ENCODE measurements at regions of chr13 and their contacts with region 1.

Region 1: GRCh38 chr13:99307648-99308339 is 595 bp upstream of the GPR183 start:
- H3K4me3 Mint-ChIP-seq: peak overlapping the region; percentile 87
- H3K27ac Mint-ChIP-seq: peak overlapping the region; percentile 94
- H3K4me1 Mint-ChIP-seq: peaks cover 71% of the 10 kb centered on the region
- H3K27me3 Mint-ChIP-seq: no peaks in the 10 kb centered on the region

Region 2: DNA sequence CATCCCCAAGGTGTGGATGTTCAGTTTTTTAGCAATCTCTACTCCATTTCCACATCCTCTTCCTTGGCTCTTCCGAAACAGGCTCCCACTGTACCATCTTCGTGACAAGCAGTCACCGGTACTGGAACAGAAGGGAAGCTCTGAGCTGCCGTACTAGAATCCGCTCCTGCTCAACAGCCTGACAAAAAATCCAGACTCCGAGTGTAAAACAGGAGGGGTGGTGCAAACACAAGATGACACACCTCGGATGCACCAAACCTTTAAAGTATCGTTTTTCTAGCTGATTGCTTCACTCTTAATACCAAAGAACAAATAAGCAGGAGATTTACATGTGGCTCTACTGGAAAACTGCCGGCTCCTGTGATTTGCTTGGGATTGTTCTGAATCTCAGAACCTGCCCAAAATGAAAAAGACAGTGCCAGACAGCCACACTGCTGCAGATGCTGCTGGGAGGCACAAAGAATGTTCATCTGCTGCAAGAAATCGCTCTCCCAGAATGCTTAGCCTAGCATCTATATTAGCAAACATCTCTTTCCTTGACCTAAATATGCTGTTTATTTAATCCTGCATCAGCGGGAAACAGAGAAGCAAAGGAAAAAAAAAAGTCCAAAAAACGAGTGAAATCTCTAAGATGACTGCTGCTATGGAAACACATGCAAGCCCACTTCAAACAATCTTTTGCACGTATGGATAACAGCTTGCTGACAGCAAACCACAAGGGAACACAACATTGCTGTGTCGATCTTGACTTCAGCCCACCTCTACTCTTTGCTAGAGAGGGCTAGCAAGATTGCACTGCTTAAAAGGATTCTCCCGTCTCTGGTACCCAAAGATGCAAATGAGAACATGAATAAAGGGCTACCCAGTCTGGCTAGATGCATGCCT is 291.9 kb before region 1 on chr13:
- intact Hi-C with region 1: no loop called
- H3K4me3 Mint-ChIP-seq: no peak overlapping the region
- H3K27ac Mint-ChIP-seq: no peak overlapping the region
- H3K4me1 Mint-ChIP-seq: no peaks in the 10 kb centered on the region
- H3K27me3 Mint-ChIP-seq: peaks cover 69% of the 10 kb centered on the region

Region 3: DNA sequence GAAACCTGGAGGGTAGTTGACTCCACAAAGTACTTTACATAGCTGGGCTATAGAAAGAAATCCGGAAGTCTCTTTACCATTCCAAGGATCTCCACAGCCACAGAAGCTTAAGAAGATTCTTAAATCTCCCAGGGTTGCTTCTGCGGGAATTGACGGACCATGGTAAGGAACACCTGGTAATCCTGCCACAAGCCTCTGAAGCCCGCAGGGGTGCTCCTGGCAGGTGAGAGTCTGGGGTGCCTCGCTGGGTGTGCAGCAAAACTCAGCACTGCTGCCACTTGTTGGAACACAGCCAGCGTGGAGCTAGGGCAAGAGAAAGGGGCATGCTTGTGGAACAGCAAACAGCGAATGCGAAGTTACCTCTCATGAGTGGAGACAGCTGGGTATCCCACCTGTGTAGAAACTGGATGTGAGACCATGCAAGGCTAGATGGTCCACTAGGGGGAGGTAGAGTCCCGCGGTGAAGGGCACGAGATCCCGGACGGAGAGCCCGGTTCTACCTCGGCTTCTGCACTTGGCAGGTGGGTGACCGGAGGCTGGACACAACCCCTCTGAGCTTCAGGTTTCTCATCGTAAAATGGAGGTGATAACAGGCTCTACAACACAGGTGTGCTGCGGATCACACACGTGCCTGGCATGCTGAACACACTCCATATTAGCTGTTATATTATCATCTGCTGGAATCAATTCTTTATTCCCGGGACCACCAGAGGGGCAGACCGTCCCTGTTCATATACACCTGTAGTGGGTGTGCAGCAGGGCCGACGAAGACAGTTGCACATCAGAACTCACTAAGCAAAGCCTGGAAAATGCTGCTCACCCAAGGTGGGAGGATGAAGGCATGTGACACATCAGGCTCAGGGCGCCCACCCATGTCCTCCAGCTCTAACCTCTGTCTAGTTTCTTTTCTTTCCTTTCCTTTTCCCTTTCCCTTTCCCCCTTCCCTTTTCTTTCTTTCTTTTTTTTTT is 131.2 kb before region 1 on chr13:
- intact Hi-C with region 1: no loop called
- H3K4me3 Mint-ChIP-seq: peak overlapping the region; percentile 33
- H3K27ac Mint-ChIP-seq: no peak overlapping the region
- H3K4me1 Mint-ChIP-seq: peaks cover 46% of the 10 kb centered on the region
- H3K27me3 Mint-ChIP-seq: peaks cover 49% of the 10 kb centered on the region

Region 4: GRCh38 chr13:99256709-99257108 is 51.1 kb before region 1 on chr13:
- intact Hi-C with region 1: no loop called
- H3K4me3 Mint-ChIP-seq: no peak overlapping the region
- H3K27ac Mint-ChIP-seq: no peak overlapping the region
- H3K4me1 Mint-ChIP-seq: peaks cover 50% of the 10 kb centered on the region
- H3K27me3 Mint-ChIP-seq: no peaks in the 10 kb centered on the region

Region 5: GRCh38 chr13:99281811-99282263 is 26.0 kb before region 1 on chr13:
- intact Hi-C with region 1: loop called (anchors 2 kb)
- H3K4me3 Mint-ChIP-seq: peak overlapping the region; percentile 40
- H3K27ac Mint-ChIP-seq: peak overlapping the region; percentile 96
- H3K4me1 Mint-ChIP-seq: peaks cover 81% of the 10 kb centered on the region
- H3K27me3 Mint-ChIP-seq: no peaks in the 10 kb centered on the region

Region 6: DNA sequence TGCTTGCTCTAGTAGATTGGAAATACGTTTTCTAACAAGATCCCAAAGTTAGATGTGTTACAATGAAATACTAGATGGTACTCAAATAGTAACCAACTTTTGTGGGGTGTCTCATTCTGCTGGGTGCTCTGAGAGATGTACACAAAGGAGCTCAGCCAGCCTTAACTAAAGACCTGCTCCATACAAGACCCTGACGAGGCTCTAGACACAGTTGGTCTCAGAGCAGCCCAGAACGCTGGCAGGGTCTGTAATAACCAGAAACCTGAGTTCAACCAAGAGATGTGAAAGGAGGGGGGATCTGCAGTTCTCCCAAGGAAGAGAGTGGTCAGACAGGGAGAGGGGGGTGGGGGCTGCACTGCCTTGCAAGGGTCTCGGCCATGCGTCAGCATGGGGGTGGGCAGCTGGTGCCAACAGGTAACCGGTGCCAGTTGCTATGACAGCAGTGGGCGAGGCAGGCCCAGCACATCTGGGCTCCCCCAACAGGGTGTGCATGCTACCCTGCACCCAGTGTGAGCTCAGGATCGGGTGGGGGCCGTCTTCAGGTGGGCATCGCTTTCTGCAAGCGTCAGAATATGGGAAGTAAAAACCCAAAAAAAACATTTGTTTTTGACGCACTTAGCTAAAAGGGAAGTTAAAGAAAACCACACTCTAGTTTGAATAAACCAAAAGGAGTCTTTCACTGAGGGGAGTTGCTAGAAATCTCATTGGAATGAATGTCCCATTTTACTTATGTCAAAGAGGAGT is 67.4 kb after region 1 on chr13:
- intact Hi-C with region 1: loop called (anchors 5 kb)
- H3K4me3 Mint-ChIP-seq: peak overlapping the region; percentile 23
- H3K27ac Mint-ChIP-seq: peak overlapping the region; percentile 88
- H3K4me1 Mint-ChIP-seq: peaks cover 89% of the 10 kb centered on the region
- H3K27me3 Mint-ChIP-seq: no peaks in the 10 kb centered on the region

Measured in dendritic cell treated with granulocyte-macrophage colony-stimulating factor and Interleukin-4, amounts not matched to agents 40 ng/mL and 50 ng/mL, for 4 days (primary cell).